Activated B cell treated with CpG ODN at 0.5 μM for 24 hours (primary cell): ENCODE measurements at regions of chr2 and their contacts with region 1.

Region 1: DNA sequence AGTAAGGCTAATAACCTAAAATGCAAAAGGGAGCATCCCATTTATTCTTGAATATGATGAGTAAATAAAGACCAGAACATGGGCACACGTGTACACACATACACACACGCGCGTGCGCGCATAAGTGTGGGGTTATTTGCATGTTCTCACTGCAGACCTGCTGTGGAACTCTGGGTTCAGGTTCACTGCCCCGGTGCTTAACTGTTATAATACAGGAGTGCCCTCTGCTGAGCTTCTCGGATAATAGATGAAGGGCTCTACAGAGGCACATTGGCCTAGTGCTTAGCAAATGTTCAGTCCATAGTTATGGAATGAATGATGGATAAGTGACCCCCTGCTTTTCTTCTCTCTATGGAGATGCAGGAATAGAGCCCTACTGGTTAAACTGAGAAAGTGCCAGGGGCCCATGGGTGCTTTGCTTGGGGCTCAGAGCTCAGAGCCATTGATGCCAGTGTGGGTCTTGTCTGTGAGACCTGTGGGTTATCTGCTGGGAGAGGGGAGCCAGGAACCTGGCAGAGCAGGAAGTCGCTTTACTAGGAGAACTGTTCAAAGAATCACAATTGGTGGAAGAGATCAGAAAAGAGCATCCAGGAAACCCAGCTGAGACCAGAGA is 3.6 kb upstream of the ARL4C start:
- DNase-seq: peak; percentile 58
- ATAC-seq: peak; percentile 68
- H3K4me3 Mint-ChIP-seq: no peak overlapping the region
- H3K27ac Mint-ChIP-seq: no peak overlapping the region
- H3K4me1 Mint-ChIP-seq: peaks cover 26% of the 10 kb centered on the region
- H3K27me3 Mint-ChIP-seq: peaks cover 18% of the 10 kb centered on the region
- CTCF ChIP-seq: peak; percentile 39

Region 2: GRCh38 chr2:233854241-233854981 is 646.1 kb before region 1 on chr2 and contains the start of gene HJURP:
- CTCF ChIA-PET with region 1: interaction called, 5 read pairs
- POLR2A ChIA-PET with region 1: no interaction called
- intact Hi-C with region 1: loop called (anchors 1 kb)
- DNase-seq: peak; percentile 82
- ATAC-seq: peak; percentile 99
- H3K4me3 Mint-ChIP-seq: peak within 1 kb of the TSS; percentile 97
- H3K27ac Mint-ChIP-seq: peak within 1 kb of the TSS; percentile 81
- H3K4me1 Mint-ChIP-seq: peaks cover 22% of the 10 kb centered on the region
- H3K27me3 Mint-ChIP-seq: peaks cover 7% of the 10 kb centered on the region
- CTCF ChIP-seq: no peak
- total RNA-seq, gene HJURP: 1.0 and 1.5 TPM in 2 replicates

Region 3: DNA sequence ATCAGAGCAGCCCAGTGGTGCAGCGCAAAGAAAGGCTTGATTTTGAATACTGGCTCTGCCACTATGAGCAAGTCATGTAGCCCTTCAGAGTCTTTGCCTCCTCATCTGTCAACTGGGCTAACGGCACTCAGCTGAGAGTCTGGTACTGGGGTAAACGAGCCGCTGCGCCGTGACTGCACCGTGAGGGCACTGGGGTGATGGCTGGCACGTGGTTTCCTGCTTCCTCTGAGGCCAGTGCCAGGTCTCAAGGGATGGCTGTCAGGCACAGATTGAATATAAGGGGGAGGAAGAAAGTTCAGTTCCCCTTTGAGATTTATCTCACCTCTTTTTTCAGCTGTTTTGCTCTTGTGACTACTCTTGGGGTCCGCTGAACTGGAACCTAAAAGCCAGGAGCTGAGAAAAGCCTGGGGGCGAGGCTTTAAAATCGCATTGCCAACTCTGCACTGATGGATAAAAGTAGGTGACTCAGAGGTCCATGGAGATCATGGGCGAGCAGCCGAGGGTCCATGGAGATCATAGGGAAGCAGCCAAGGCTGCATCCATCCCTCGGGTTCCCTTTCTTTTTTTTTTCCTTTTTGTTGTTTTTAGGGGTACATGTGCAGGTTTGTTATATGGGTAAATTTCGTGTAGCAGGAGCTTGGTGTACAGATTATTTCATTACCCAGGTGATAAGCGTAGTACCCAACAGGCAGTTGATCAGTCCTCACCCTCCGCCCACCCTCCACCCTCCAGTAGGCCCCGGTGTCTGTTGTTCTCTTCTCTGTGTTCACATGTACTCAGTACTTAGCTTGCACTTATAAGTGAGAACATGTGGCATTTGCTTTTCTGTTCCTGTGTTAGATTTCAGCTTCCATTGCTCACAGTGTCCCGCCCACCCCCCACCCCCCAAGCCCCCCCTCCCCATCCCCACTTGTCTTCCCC is 335.7 kb before region 1 on chr2:
- CTCF ChIA-PET with region 1: interaction called, 4 read pairs
- POLR2A ChIA-PET with region 1: interaction called, 24 read pairs
- intact Hi-C with region 1: loop called (anchors 1 kb)
- DNase-seq: peak; percentile 62
- ATAC-seq: peak; percentile 97
- H3K4me3 Mint-ChIP-seq: peak overlapping the region; percentile 48
- H3K27ac Mint-ChIP-seq: peak overlapping the region; percentile 74
- H3K4me1 Mint-ChIP-seq: peaks cover 54% of the 10 kb centered on the region
- H3K27me3 Mint-ChIP-seq: peaks cover 3% of the 10 kb centered on the region
- CTCF ChIP-seq: no peak

Region 4: GRCh38 chr2:234411793-234412192 is 88.7 kb before region 1 on chr2:
- CTCF ChIA-PET with region 1: interaction called, 4 read pairs
- POLR2A ChIA-PET with region 1: interaction called, 14 read pairs
- intact Hi-C with region 1: no loop called
- DNase-seq: no peak
- ATAC-seq: peak; percentile 85
- H3K4me3 Mint-ChIP-seq: peak overlapping the region; percentile 44
- H3K27ac Mint-ChIP-seq: no peak overlapping the region
- H3K4me1 Mint-ChIP-seq: peaks cover 58% of the 10 kb centered on the region
- H3K27me3 Mint-ChIP-seq: no peaks in the 10 kb centered on the region
- CTCF ChIP-seq: no peak

Region 5: DNA sequence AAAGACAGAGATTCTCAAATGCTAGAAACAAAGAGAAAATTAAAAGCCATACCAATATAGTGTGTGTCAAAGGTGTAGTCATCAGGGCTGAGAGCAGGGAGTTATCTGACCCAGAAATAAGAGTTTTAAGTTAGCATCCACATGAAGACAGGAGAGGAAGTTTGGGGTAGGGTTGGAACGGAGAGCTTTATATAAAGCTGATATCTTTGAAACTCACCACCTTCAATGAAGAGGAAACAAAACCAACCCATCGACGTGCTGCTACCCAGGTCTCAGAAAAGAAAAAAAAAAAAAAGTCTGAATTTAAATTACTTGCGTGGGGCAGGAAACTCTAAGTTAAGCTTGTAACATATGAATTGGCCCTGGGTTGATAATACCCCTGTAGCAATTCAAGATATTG is 46.1 kb before region 1 on chr2:
- CTCF ChIA-PET with region 1: interaction called, 3 read pairs
- POLR2A ChIA-PET with region 1: interaction called, 10 read pairs
- intact Hi-C with region 1: no loop called
- DNase-seq: no peak
- ATAC-seq: peak; percentile 82
- H3K4me3 Mint-ChIP-seq: peak overlapping the region; percentile 36
- H3K27ac Mint-ChIP-seq: peak overlapping the region; percentile 47
- H3K4me1 Mint-ChIP-seq: peaks cover 62% of the 10 kb centered on the region
- H3K27me3 Mint-ChIP-seq: no peaks in the 10 kb centered on the region
- CTCF ChIP-seq: no peak

Region 6: GRCh38 chr2:234911271-234911670 is 410.8 kb after region 1 on chr2:
- CTCF ChIA-PET with region 1: no interaction called
- POLR2A ChIA-PET with region 1: no interaction called
- intact Hi-C with region 1: no loop called
- DNase-seq: no peak
- ATAC-seq: no peak
- H3K4me3 Mint-ChIP-seq: no peak overlapping the region
- H3K27ac Mint-ChIP-seq: no peak overlapping the region
- H3K4me1 Mint-ChIP-seq: no peaks in the 10 kb centered on the region
- H3K27me3 Mint-ChIP-seq: no peaks in the 10 kb centered on the region
- CTCF ChIP-seq: no peak